ENCODE measurements at regions of chr5 and their contacts with region 1.

Region 1: DNA sequence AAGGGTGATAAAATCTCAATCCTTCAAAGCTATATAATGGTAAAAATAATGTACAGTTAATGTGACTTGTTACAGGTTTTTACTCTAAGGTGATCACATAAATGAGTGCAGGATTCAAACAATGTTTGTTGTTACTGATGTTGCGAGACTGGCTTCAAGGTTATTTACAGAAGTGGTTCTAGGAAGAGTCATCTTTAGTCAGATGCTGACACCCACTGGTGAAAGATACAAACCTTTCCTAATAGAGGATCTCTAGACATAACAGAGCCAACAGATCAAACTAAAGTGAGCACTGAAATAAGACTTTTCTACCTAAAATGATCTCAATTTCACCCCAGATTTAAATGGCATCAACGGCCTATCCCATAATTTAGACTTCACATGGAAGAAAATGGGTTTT is 20.2 kb downstream of the ARSB start:
- DNase-seq: peak; percentile 48
- ATAC-seq: peak; percentile 79
- H3K4me3 ChIP-seq: no peak overlapping the region
- H3K27ac ChIP-seq: no peak overlapping the region
- H3K4me1 ChIP-seq: no peaks in the 10 kb centered on the region
- H3K27me3 ChIP-seq: no peaks in the 10 kb centered on the region
- CTCF ChIP-seq: peak; percentile 38 to 56 (median 48); a peak in 5 of 6 replicates
- POLR2A ChIP-seq: no peak
- RAD21 ChIP-seq: peak; percentile 80

Region 2: GRCh38 chr5:78320401-78320800 is 644.5 kb before region 1 on chr5:
- CTCF ChIA-PET with region 1: interaction called, 8 read pairs
- POLR2A ChIA-PET with region 1: no interaction called
- RAD21 ChIA-PET with region 1: no interaction called
- intact Hi-C with region 1: loop called (anchors 2 kb)
- DNase-seq: peak; percentile 19
- ATAC-seq: peak; percentile 70
- H3K4me3 ChIP-seq: no peak overlapping the region
- H3K27ac ChIP-seq: no peak overlapping the region
- H3K4me1 ChIP-seq: no peaks in the 10 kb centered on the region
- H3K27me3 ChIP-seq: no peaks in the 10 kb centered on the region
- CTCF ChIP-seq: peak; percentile 55 to 66 (median 58); a peak in 5 of 6 replicates
- POLR2A ChIP-seq: no peak
- RAD21 ChIP-seq: peak; percentile 74

Region 3: DNA sequence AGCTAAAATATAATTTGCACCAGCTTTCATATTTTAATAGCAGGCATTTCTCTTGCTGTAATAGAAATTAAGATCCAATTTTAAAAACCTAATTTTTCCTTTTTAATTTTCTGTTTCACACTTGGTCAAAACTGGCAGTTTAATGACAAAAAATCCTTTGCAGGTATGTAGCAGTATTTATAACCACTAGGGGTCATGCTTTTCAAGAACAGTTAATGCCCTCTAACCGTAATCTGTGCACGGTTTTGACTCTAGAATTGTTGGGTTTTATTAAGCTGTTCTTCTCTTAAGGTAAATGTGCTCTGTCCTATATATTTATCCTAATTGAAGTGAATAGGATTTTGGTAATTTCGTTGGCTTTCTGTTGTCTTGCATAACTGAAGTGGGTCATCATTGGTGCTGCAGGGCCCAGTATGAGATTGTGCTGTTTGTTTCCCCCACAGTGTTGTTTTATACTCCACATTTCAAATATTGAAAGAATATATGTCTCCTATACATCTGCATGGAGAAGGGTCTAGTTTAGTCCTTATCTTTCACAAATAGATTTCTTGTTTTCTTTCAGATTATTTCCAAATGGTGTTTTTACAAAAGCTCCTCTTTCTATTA is 497.0 kb before region 1 on chr5:
- CTCF ChIA-PET with region 1: interaction called, 5 read pairs
- POLR2A ChIA-PET with region 1: no interaction called
- RAD21 ChIA-PET with region 1: no interaction called
- intact Hi-C with region 1: loop called (anchors 5 kb)
- DNase-seq: no peak
- ATAC-seq: peak; percentile 72
- H3K4me3 ChIP-seq: no peak overlapping the region
- H3K27ac ChIP-seq: no peak overlapping the region
- H3K4me1 ChIP-seq: no peaks in the 10 kb centered on the region
- H3K27me3 ChIP-seq: no peaks in the 10 kb centered on the region
- CTCF ChIP-seq: peak; percentile 54 to 81 (median 66); a peak in 5 of 6 replicates
- POLR2A ChIP-seq: no peak
- RAD21 ChIP-seq: peak; percentile 57

Region 4: DNA sequence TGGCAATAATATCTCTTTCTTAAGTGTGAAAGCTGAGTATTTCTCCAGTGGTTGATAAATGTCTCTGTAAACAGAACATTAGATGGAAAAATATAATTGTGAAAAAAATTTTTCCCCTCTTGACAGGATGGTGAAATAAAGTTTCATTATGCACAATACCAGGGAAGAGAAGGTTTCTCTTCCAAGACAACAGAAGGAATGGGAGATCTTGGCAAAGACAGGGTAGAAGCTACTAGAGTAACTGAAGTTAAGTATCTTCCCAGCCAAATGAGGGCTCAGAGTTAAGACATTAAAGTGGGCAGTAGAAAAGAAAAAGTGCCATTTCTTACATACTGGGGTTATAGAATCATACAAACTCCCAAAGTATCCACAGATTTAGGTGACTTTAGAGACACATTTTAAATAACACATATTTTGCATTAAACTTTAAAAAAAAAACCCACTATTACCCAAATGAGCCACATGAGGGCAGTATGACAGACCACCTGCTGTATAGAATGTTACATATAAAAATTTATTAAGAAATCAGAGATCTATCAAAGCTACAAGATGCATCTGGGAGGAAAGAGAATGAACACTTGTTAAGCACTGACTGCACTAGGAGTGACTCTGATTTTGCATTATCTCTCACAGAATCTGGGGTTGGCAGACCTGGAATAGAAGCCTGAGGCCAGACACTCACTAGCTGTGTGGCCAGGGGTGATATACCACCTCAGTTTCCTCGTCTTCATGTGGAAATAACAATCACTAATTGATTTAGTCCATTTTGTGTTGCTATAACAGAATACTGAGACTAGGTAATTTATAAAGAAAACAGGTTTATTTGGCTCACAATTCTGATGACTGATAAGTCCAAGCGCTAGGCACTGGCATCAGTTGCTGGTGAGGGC is 78.3 kb before region 1 on chr5:
- CTCF ChIA-PET with region 1: interaction called, 12 read pairs
- POLR2A ChIA-PET with region 1: no interaction called
- RAD21 ChIA-PET with region 1: no interaction called
- intact Hi-C with region 1: no loop called
- DNase-seq: no peak
- ATAC-seq: peak; percentile 36; the same call in 1 of the 2 replicates
- H3K4me3 ChIP-seq: no peak overlapping the region
- H3K27ac ChIP-seq: no peak overlapping the region
- H3K4me1 ChIP-seq: peaks cover 0 to 5% of the 10 kb centered on the region in 2 experiments; a peak in 2 of 4 replicates
- H3K27me3 ChIP-seq: no peaks in the 10 kb centered on the region
- CTCF ChIP-seq: peak; percentile 30 to 77 (median 56); a peak in 5 of 6 replicates
- POLR2A ChIP-seq: no peak
- RAD21 ChIP-seq: peak; percentile 31; the same call in 1 of the 2 replicates